ENCODE measurements at regions of chr22 and their contacts with region 1.

Region 1: GRCh38 chr22:35257321-35258190 is at the start of gene HMGXB4:
- DNase-seq: peak; percentile 93
- ATAC-seq: peak; percentile 88
- H3K4me3 ChIP-seq: peak within 1 kb of the TSS; percentile 64 to 79 (median 71)
- H3K4me3 Mint-ChIP-seq: peak within 1 kb of the TSS; percentile 92
- H3K27ac ChIP-seq: peak within 1 kb of the TSS; percentile 71 to 91
- H3K27ac Mint-ChIP-seq: peak within 1 kb of the TSS; percentile 94
- H3K4me1 ChIP-seq: peaks cover 12 to 15% of the 10 kb centered on the region in 2 donors
- H3K4me1 Mint-ChIP-seq: peaks cover 21% of the 10 kb centered on the region
- H3K27me3 ChIP-seq: no peaks in the 10 kb centered on the region
- H3K27me3 Mint-ChIP-seq: no peaks in the 10 kb centered on the region
- CTCF ChIP-seq: peak; percentile 38
- total RNA-seq, gene HMGXB4: 25.2 and 28.7 TPM in 2 replicates

Region 2: GRCh38 chr22:35299673-35300497 is 42.3 kb after region 1 on chr22 and contains the start of gene TOM1:
- CTCF ChIA-PET with region 1: interaction called, 6 read pairs
- POLR2A ChIA-PET with region 1: interaction called, 20 read pairs
- intact Hi-C with region 1: loop called (anchors 1 kb)
- DNase-seq: peak; percentile 100
- ATAC-seq: peak; percentile 90
- H3K4me3 ChIP-seq: peak within 1 kb of the TSS; percentile 61 to 94 (median 73)
- H3K4me3 Mint-ChIP-seq: peak within 1 kb of the TSS; percentile 93
- H3K27ac ChIP-seq: peak within 1 kb of the TSS; percentile 96 to 97
- H3K27ac Mint-ChIP-seq: peak within 1 kb of the TSS; percentile 98
- H3K4me1 ChIP-seq: peaks cover 5 to 22% of the 10 kb centered on the region in 2 donors
- H3K4me1 Mint-ChIP-seq: peaks cover 26% of the 10 kb centered on the region
- H3K27me3 ChIP-seq: no peaks in the 10 kb centered on the region
- H3K27me3 Mint-ChIP-seq: no peaks in the 10 kb centered on the region
- CTCF ChIP-seq: no peak
- total RNA-seq, gene TOM1: 53.2 and 54.2 TPM in 2 replicates

Measured in B cell (primary cell).